Common myeloid progenitor, CD34-positive (primary cell): ENCODE measurements at regions of chr4 and their contacts with region 1.

Region 1: DNA sequence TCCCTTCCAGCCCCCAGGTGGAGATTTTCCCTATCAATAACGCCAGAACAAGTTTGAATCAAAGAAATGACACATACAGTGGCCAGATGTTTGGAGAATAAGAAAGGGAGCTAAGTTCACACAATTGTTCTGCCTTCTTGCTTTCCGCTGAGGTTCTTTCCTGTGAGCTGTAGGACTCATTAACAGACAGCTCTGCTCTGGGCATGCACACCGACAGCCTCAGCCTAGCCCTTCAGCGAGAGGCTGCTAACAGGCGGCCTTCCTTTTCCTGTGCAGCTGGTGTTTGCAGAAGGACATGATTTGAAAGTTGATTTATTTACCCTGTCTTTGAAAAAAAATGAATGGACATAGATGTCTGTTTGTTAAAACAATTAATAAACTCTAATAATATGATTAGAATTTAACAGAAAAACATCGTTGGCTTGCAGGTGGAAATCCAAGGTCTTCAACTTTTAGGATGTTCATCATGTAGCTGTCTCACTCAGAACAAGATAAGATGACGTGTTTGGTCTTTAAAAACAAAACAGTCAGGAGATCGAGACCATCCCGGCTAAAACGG is 183.3 kb downstream of the KDR start:
- DNase-seq: peak; percentile 75 to 97 (median 96)
- H3K4me3 ChIP-seq: peak overlapping the region in 6 of 7 experiments; percentile 30 to 66 (median 39)
- H3K27ac ChIP-seq: peak overlapping the region; percentile 9 to 77
- H3K4me1 ChIP-seq: peaks cover 36 to 75% (median 59%) of the 10 kb centered on the region in 4 experiments
- H3K27me3 ChIP-seq: no peaks in the 10 kb centered on the region

Region 2: GRCh38 chr4:54384563-54384962 is 557.5 kb before region 1 on chr4:
- CTCF ChIA-PET with region 1: interaction called, 16 read pairs
- POLR2A ChIA-PET with region 1: no interaction called
- DNase-seq: peak; percentile 73 to 84 (median 80)
- H3K4me3 ChIP-seq: no peak overlapping the region
- H3K27ac ChIP-seq: no peak overlapping the region
- H3K4me1 ChIP-seq: peaks cover 0 to 5% (median 2%) of the 10 kb centered on the region in 4 experiments
- H3K27me3 ChIP-seq: no peaks in the 10 kb centered on the region

Region 3: GRCh38 chr4:54863571-54864255 is 78.4 kb before region 1 on chr4:
- CTCF ChIA-PET with region 1: no interaction called
- POLR2A ChIA-PET with region 1: no interaction called
- DNase-seq: no peak
- H3K4me3 ChIP-seq: no peak overlapping the region
- H3K27ac ChIP-seq: no peak overlapping the region
- H3K4me1 ChIP-seq: no peaks in the 10 kb centered on the region
- H3K27me3 ChIP-seq: no peaks in the 10 kb centered on the region

Region 4: DNA sequence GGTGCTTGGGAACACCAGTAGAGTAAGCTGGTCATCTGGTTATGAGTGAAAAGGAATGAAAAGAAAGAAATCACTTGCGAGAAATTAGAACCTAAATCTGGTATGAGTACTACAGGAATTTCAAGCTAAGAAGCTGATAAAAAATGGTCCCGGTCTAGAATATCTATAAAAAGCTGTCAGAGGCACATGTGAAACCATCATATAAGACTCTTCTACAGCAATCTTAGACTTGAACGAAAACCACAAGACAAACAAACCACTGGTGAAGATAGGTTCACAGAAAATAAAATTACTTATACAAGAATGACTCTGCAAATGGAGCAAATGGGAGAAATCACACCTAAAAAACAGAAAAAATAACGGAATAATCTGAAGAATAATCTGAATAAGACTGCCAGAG is 113.5 kb after region 1 on chr4:
- CTCF ChIA-PET with region 1: no interaction called
- POLR2A ChIA-PET with region 1: no interaction called
- DNase-seq: no peak
- H3K4me3 ChIP-seq: no peak overlapping the region
- H3K27ac ChIP-seq: no peak overlapping the region
- H3K4me1 ChIP-seq: no peaks in the 10 kb centered on the region
- H3K27me3 ChIP-seq: no peaks in the 10 kb centered on the region